Naive thymus-derived CD4-positive, alpha-beta T cell (primary cell): ENCODE measurements at regions of chr6 and their contacts with region 1.

Region 1: GRCh38 chr6:149028767-149029405 is 282.1 kb downstream of the UST start:
- DNase-seq: peak in 8 of 9 donors; percentile 45 to 83 (median 76)
- ATAC-seq: peak; percentile 85
- H3K4me3 ChIP-seq: no peak overlapping the region
- H3K4me3 Mint-ChIP-seq: peak overlapping the region in 1 of 10 donors; percentile 68
- H3K27ac ChIP-seq: no peak overlapping the region
- H3K27ac Mint-ChIP-seq: peak overlapping the region in 4 of 9 donors; percentile 2 to 81 (median 43)
- H3K4me1 ChIP-seq: peaks cover 8 to 15% of the 10 kb centered on the region in 2 donors
- H3K4me1 Mint-ChIP-seq: peaks cover 0 to 52% (median 12%) of the 10 kb centered on the region in 7 donors
- H3K27me3 ChIP-seq: no peaks in the 10 kb centered on the region
- H3K27me3 Mint-ChIP-seq: no peaks in the 10 kb centered on the region

Region 2: GRCh38 chr6:149060300-149060997 is 31.6 kb after region 1 on chr6:
- CTCF ChIA-PET with region 1: interaction called, 3 read pairs
- POLR2A ChIA-PET with region 1: interaction called, 3 read pairs
- intact Hi-C with region 1: loop called in 1 of 2 experiments (anchors 1 kb)
- DNase-seq: peak in 7 of 9 donors; percentile 21 to 54 (median 25)
- ATAC-seq: peak; percentile 89
- H3K4me3 ChIP-seq: peak overlapping the region; percentile 25
- H3K4me3 Mint-ChIP-seq: peak overlapping the region; percentile 47 to 83 (median 78)
- H3K27ac ChIP-seq: no peak overlapping the region
- H3K27ac Mint-ChIP-seq: peak overlapping the region; percentile 23 to 95 (median 68)
- H3K4me1 ChIP-seq: peaks cover 9 to 16% of the 10 kb centered on the region in 2 donors
- H3K4me1 Mint-ChIP-seq: peaks cover 17 to 71% (median 34%) of the 10 kb centered on the region in 7 donors
- H3K27me3 ChIP-seq: no peaks in the 10 kb centered on the region
- H3K27me3 Mint-ChIP-seq: no peaks in the 10 kb centered on the region

Region 3: GRCh38 chr6:149140137-149140909 is 111.4 kb after region 1 on chr6:
- CTCF ChIA-PET with region 1: no interaction called
- POLR2A ChIA-PET with region 1: no interaction called
- intact Hi-C with region 1: loop called in 1 of 2 experiments (anchors 2 kb)
- DNase-seq: peak; percentile 7 to 67 (median 27)
- ATAC-seq: peak; percentile 82
- H3K4me3 ChIP-seq: peak overlapping the region; percentile 14
- H3K4me3 Mint-ChIP-seq: peak overlapping the region; percentile 17 to 89 (median 78)
- H3K27ac ChIP-seq: peak overlapping the region; percentile 88
- H3K27ac Mint-ChIP-seq: peak overlapping the region in 8 of 9 donors; percentile 95 to 100 (median 98)
- H3K4me1 ChIP-seq: peaks cover 12 to 27% of the 10 kb centered on the region in 2 donors
- H3K4me1 Mint-ChIP-seq: peaks cover 20 to 61% (median 44%) of the 10 kb centered on the region in 7 donors
- H3K27me3 ChIP-seq: no peaks in the 10 kb centered on the region
- H3K27me3 Mint-ChIP-seq: no peaks in the 10 kb centered on the region

Region 4: GRCh38 chr6:149431905-149432775 is 403.3 kb after region 1 on chr6:
- CTCF ChIA-PET with region 1: interaction called, 110 read pairs
- POLR2A ChIA-PET with region 1: no interaction called
- intact Hi-C with region 1: loop called (anchors 1 kb)
- DNase-seq: peak; percentile 63 to 89 (median 78)
- ATAC-seq: peak; percentile 92
- H3K4me3 ChIP-seq: peak overlapping the region; percentile 44
- H3K4me3 Mint-ChIP-seq: peak overlapping the region; percentile 35 to 84 (median 72)
- H3K27ac ChIP-seq: no peak overlapping the region
- H3K27ac Mint-ChIP-seq: peak overlapping the region in 5 of 9 donors; percentile 25 to 86 (median 67)
- H3K4me1 ChIP-seq: no peaks in the 10 kb centered on the region
- H3K4me1 Mint-ChIP-seq: peaks cover 0 to 20% (median 4%) of the 10 kb centered on the region in 7 donors
- H3K27me3 ChIP-seq: no peaks in the 10 kb centered on the region
- H3K27me3 Mint-ChIP-seq: no peaks in the 10 kb centered on the region

Region 5: DNA sequence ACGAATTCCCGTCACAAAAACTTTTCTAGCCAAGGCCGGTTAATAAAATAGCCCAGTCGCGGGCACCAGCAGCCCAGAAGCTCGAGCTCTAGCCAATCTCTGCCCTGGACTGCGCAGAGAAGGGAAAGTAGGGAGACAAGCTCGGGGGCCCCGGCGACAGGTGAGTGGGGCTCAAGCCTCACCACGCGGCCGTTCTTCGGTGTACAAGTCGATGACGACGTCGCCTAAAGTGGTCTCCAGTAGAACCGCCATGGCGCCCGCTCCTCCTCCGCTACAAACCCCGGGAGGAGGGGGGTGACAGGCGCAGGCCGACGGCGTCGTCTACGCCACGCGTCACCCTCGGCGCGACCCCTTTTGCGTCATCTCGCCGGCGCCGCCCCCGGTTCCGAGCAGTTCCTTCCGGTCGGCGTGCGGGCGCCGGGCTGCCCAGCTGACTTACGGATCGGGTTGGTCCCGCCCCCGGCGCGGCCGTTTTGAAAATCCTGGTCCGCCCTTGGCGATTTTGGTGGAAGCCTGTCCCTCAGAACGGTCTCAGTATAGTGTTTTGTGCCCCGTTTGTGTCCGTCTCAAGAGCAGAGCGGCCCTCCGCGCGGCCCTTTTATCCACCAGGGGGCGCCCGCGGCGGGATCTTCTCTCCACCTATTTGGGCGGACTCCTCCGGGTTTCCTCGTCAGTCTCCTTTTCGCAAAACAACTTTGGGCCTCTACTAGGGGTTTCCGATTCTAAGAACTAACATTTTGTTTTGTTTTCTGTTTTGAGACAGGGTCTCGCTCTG is 517.1 kb after region 1 on chr6 and contains the start of gene PPIL4:
- CTCF ChIA-PET with region 1: no interaction called
- POLR2A ChIA-PET with region 1: no interaction called
- intact Hi-C with region 1: loop called in 1 of 2 experiments (anchors 1 kb)
- DNase-seq: peak; percentile 94 to 98 (median 97)
- ATAC-seq: peak; percentile 93
- H3K4me3 ChIP-seq: peak within 1 kb of the TSS; percentile 90
- H3K4me3 Mint-ChIP-seq: peak within 1 kb of the TSS; percentile 86 to 100 (median 98)
- H3K27ac ChIP-seq: peak within 1 kb of the TSS; percentile 99
- H3K27ac Mint-ChIP-seq: peak within 1 kb of the TSS; percentile 91 to 100 (median 99)
- H3K4me1 ChIP-seq: peaks cover 19 to 22% of the 10 kb centered on the region in 2 donors
- H3K4me1 Mint-ChIP-seq: peaks cover 31 to 51% (median 41%) of the 10 kb centered on the region in 7 donors
- H3K27me3 ChIP-seq: no peaks in the 10 kb centered on the region
- H3K27me3 Mint-ChIP-seq: peaks cover 0 to 15% (median 6%) of the 10 kb centered on the region in 5 donors
- total RNA-seq, gene PPIL4: 21.0 to 42.9 (median 35.7) TPM

Region 6: GRCh38 chr6:149863697-149864577 is 835.1 kb after region 1 on chr6 and contains the start of gene LRP11:
- CTCF ChIA-PET with region 1: interaction called, 3 read pairs
- POLR2A ChIA-PET with region 1: no interaction called
- intact Hi-C with region 1: loop called in 1 of 2 experiments (anchors 10 kb)
- DNase-seq: peak; percentile 73 to 90 (median 83)
- ATAC-seq: peak; percentile 93
- H3K4me3 ChIP-seq: peak within 1 kb of the TSS; percentile 63
- H3K4me3 Mint-ChIP-seq: peak within 1 kb of the TSS; percentile 80 to 88 (median 82)
- H3K27ac ChIP-seq: peak within 1 kb of the TSS; percentile 62
- H3K27ac Mint-ChIP-seq: peak within 1 kb of the TSS in 6 of 9 donors; percentile 24 to 82 (median 48)
- H3K4me1 ChIP-seq: peaks cover 6 to 10% of the 10 kb centered on the region in 2 donors
- H3K4me1 Mint-ChIP-seq: peaks cover 0 to 21% (median 10%) of the 10 kb centered on the region in 7 donors
- H3K27me3 ChIP-seq: no peaks in the 10 kb centered on the region
- H3K27me3 Mint-ChIP-seq: peaks cover 0 to 41% (median 8%) of the 10 kb centered on the region in 5 donors
- total RNA-seq, gene LRP11: 0.88 to 3.7 (median 2.8) TPM